Heart right ventricle (tissue), 16 donors: ENCODE measurements at regions of chr12 and their contacts with region 1.

Region 1: DNA sequence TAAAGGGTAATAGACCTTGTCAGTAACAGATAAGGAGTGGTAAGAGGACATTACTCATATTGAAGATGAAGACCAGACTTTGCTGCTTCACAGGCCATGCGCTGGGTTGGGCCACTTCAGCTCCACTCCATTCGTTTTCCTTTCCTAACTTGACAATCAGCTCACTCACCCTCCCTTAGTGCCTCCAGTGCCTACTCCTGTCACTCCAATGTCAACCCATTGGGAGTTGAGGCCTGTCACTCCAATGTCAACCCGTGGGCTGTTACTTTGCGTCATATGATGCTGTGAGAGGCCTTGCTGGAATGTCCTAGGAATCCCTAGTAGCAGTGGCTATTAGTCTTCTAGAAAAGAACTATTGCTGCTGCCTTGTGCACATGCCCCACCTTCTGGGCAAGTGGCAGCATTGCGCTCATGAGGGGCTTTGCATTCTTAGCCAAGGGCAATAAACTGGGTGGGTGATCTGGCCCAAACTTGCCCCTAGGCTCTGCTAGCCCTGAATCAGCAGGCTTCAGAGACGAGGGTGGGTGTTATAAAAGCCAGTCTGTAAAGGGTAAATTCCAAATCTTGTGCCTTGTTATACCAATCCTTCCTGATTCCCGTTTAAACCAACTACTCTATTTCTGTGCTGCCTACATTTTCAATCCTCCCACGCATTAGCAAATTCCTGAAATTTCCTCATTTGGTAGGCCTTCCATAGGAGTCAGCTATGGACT is 36.1 kb downstream of the BAZ2A start:
- DNase-seq: peak in 1 of 2 donors; percentile 32
- ATAC-seq: peak; percentile 42 to 77 (median 69)
- H3K4me3 ChIP-seq: no peak overlapping the region
- H3K27ac ChIP-seq: peak overlapping the region in 7 of 10 donors; percentile 17 to 67 (median 54)
- H3K4me1 ChIP-seq: peaks cover 3 to 25% (median 11%) of the 10 kb centered on the region in 9 donors
- H3K27me3 ChIP-seq: no peaks in the 10 kb centered on the region
- CTCF ChIP-seq: peak; percentile 50 to 81 (median 66)

Region 2: DNA sequence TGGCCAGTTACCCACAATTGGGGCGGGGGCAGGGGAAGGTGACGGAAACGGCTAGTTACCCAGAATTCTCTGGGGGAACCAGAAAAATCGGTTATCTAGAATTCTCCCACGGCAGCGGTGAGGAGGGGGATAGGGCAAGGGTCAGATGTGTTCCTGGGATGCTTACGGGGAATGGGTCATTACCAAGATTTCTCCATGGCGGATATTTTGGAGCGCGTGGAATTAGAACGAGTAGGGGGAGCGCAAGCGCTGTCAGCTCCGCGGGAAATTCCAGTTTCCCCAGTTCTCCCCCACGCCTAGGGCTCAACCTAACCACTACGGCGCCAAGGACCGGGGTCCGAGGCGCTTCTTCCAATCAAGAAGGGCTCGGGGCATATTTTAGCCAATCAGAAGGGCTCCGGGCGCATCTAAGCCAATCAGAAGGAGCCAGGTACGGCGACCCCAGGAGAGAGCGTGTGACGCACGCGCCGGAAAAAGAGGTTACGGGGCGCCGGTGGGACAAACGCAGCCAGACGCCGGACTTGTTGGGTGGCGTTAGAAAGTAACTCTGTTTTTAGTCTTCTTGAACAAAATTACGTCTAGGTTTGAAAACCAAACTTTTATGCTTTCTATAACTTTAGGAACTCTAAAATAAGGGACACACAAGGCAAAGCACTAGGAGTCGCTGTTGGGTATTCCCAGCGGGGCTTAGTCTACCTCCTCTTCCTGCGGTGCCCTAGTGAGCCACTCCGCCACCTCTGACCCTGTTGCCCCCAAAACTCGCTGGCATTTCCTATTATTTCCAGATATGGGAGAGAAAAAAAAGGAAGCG is 260.2 kb before region 1 on chr12 and contains the start of gene PAN2:
- intact Hi-C with region 1: loop called in 1 of 10 experiments (anchors 10 kb)
- DNase-seq: peak; percentile 93 to 97
- ATAC-seq: peak; percentile 98 to 99 (median 99)
- H3K4me3 ChIP-seq: peak within 1 kb of the TSS; percentile 52 to 73 (median 61)
- H3K27ac ChIP-seq: peak within 1 kb of the TSS; percentile 84 to 97 (median 94)
- H3K4me1 ChIP-seq: peaks cover 6 to 35% (median 15%) of the 10 kb centered on the region in 9 donors
- H3K27me3 ChIP-seq: no peaks in the 10 kb centered on the region
- CTCF ChIP-seq: peak in 8 of 9 donors; percentile 29 to 74 (median 52)
- total RNA-seq, gene PAN2: 23.6 to 64.4 (median 38.1) TPM

Region 3: GRCh38 chr12:56510786-56511185 is 83.3 kb before region 1 on chr12:
- intact Hi-C with region 1: loop called in 2 of 10 experiments (anchors 5 kb)
- DNase-seq: no peak
- ATAC-seq: no peak
- H3K4me3 ChIP-seq: no peak overlapping the region
- H3K27ac ChIP-seq: no peak overlapping the region
- H3K4me1 ChIP-seq: peaks cover 0 to 7% (median 0%) of the 10 kb centered on the region in 9 donors
- H3K27me3 ChIP-seq: no peaks in the 10 kb centered on the region
- CTCF ChIP-seq: no peak